K562 (cell line): ENCODE measurements at regions of chr2 and their contacts with region 1.

Region 1: GRCh38 chr2:69026026-69026425 is 13.0 kb downstream of the ANTXR1 start:
- DNase-seq: peak; percentile 39 to 68 (median 51)
- ATAC-seq: peak; percentile 92
- H3K4me3 ChIP-seq: no peak overlapping the region
- H3K27ac ChIP-seq: no peak overlapping the region
- H3K4me1 ChIP-seq: no peaks in the 10 kb centered on the region
- H3K27me3 ChIP-seq: no peaks in the 10 kb centered on the region
- CTCF ChIP-seq: peak; percentile 58 to 83 (median 67)
- EP300 ChIP-seq: no peak
- POLR2A ChIP-seq: no peak
- RAD21 ChIP-seq: peak; percentile 93 to 95

Region 2: GRCh38 chr2:69200107-69200520 is 174.1 kb after region 1 on chr2:
- CTCF ChIA-PET with region 1: no interaction called
- POLR2A ChIA-PET with region 1: no interaction called
- in situ Hi-C with region 1: no loop called
- intact Hi-C with region 1: loop called (anchors 10 kb)
- DNase-seq: no peak
- ATAC-seq: no peak
- H3K4me3 ChIP-seq: no peak overlapping the region
- H3K27ac ChIP-seq: no peak overlapping the region
- H3K4me1 ChIP-seq: no peaks in the 10 kb centered on the region
- H3K27me3 ChIP-seq: peaks cover 7 to 28% of the 10 kb centered on the region in 2 experiments; a peak in 3 of 5 replicates
- CTCF ChIP-seq: no peak
- EP300 ChIP-seq: no peak
- POLR2A ChIP-seq: no peak
- RAD21 ChIP-seq: no peak

Region 3: GRCh38 chr2:69306822-69307578 is 281.0 kb after region 1 on chr2:
- CTCF ChIA-PET with region 1: interaction called, 5 read pairs
- POLR2A ChIA-PET with region 1: no interaction called
- in situ Hi-C with region 1: loop called (anchors 25 kb)
- intact Hi-C with region 1: loop called (anchors 1 kb)
- DNase-seq: peak; percentile 80 to 87 (median 85)
- ATAC-seq: peak; percentile 96
- H3K4me3 ChIP-seq: peak overlapping the region; percentile 35
- H3K27ac ChIP-seq: no peak overlapping the region
- H3K4me1 ChIP-seq: peaks cover 0 to 18% of the 10 kb centered on the region in 2 experiments; a peak in 3 of 5 replicates
- H3K27me3 ChIP-seq: peaks cover 13 to 30% of the 10 kb centered on the region in 2 experiments; a peak in 4 of 5 replicates
- CTCF ChIP-seq: peak; percentile 84 to 99 (median 90)
- EP300 ChIP-seq: no peak
- POLR2A ChIP-seq: no peak
- RAD21 ChIP-seq: peak; percentile 86 to 90

Region 4: DNA sequence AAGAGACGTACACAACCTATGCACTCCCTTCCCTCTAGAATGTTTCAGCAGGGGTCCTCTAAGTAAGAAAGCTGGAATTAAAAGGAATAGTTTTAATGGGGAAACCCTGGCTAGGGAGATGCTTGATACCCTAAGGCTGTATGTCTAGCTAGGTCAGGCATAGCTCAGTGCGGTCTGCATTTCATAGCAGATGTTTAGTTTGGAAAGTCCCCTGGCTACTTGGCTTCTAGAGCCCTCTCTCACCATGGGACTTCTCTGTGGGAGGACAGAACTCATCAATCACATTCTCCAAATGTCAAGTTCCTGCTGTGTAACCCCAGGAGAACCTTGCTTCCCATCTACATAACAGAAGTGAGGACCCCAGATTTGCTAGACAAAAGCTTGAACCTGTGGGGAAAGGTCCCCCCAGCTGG is 691.8 kb after region 1 on chr2:
- CTCF ChIA-PET with region 1: no interaction called
- POLR2A ChIA-PET with region 1: no interaction called
- in situ Hi-C with region 1: loop called (anchors 25 kb)
- intact Hi-C with region 1: loop called (anchors 10 kb)
- DNase-seq: no peak
- ATAC-seq: no peak
- H3K4me3 ChIP-seq: no peak overlapping the region
- H3K27ac ChIP-seq: no peak overlapping the region
- H3K4me1 ChIP-seq: peaks cover 0 to 8% of the 10 kb centered on the region in 2 experiments; a peak in 2 of 5 replicates
- H3K27me3 ChIP-seq: no peaks in the 10 kb centered on the region
- CTCF ChIP-seq: no peak
- EP300 ChIP-seq: no peak
- POLR2A ChIP-seq: no peak
- RAD21 ChIP-seq: no peak